Ovary (tissue), 10 donors: ENCODE measurements at regions of chr11 and their contacts with region 1.

Region 1: GRCh38 chr11:45339729-45340519 is 53.8 kb upstream of the SYT13 start:
- DNase-seq: peak; percentile 93 to 96 (median 96)
- H3K4me3 ChIP-seq: no peak overlapping the region
- H3K27ac ChIP-seq: no peak overlapping the region
- H3K4me1 ChIP-seq: peaks cover 2% of the 10 kb centered on the region
- H3K27me3 ChIP-seq: no peaks in the 10 kb centered on the region
- CTCF ChIP-seq: peak; percentile 81 to 88 (median 87)
- EP300 ChIP-seq: no peak
- POLR2A ChIP-seq: no peak

Region 2: DNA sequence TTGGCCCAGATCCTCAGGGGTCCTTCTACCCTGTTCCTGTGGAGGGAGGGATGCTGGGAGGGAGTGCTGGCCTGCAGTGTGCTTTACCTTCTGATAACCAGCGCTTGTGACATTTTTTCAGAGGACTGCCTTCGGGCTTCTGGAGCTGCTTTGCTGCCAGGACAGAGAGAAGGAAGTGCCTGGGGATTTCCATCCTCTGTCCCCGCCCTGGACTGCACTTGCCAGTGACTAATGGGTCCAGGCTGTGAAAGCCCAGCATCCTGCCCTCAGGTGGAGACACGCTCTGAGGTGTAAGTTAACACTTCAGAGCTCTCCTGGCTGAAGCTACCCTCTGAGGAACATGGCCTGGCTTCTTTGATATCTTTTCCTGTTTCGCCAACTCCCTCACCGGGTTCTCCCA is 104.9 kb after region 1 on chr11:
- intact Hi-C with region 1: no loop called
- DNase-seq: no peak
- H3K4me3 ChIP-seq: no peak overlapping the region
- H3K27ac ChIP-seq: no peak overlapping the region
- H3K4me1 ChIP-seq: no peaks in the 10 kb centered on the region
- H3K27me3 ChIP-seq: no peaks in the 10 kb centered on the region
- CTCF ChIP-seq: no peak
- EP300 ChIP-seq: no peak
- POLR2A ChIP-seq: no peak

Region 3: GRCh38 chr11:45537614-45538013 is 197.7 kb after region 1 on chr11:
- intact Hi-C with region 1: no loop called
- DNase-seq: no peak
- H3K4me3 ChIP-seq: no peak overlapping the region
- H3K27ac ChIP-seq: no peak overlapping the region
- H3K4me1 ChIP-seq: no peaks in the 10 kb centered on the region
- H3K27me3 ChIP-seq: no peaks in the 10 kb centered on the region
- CTCF ChIP-seq: no peak
- EP300 ChIP-seq: no peak
- POLR2A ChIP-seq: no peak

Region 4: DNA sequence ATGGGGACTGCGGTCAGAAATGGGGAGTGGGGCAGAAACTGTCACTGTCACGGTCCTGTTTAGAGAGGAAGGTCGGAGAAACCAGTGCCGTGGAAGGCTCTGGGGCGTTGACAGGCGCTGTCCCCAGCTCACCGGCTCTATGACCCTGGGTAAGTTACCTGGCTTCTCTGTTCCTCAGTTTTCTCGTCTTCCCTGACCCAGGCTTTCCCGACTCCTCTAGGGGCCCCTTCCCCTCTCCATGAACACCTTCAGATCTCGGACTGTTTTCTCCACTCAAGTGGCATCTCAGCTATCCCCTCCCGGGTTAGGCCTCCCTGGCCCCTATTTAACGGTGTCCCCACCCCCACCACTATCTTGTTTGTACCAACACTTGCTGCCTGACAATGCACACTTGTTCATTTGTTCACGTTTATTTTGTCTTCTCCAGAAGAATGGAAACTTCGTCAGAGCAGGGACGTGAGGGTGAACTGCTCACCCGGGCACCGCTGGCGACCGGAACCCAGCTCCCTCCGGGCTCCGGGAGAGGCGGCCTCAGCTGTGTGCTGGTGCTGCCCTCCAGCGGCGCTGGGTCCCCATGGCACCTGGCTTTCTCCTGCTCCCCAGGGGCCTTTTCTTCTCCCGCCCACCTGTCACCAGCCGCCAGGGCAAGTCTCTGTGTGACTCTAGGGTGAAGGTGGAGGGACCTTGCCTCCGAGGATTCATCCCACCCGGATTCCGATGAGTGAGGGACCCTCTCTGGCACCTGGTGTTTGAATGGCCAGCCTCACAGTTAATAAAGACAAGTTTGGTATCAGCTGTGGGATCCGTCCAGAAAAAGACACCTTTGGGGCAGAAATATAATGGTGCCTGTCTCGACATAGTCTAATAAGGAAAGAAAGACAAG is 431.9 kb after region 1 on chr11:
- intact Hi-C with region 1: loop called in 2 of 4 experiments (anchors 5 to 10 kb)
- DNase-seq: peak; percentile 77 to 89 (median 84)
- H3K4me3 ChIP-seq: peak overlapping the region; percentile 36
- H3K27ac ChIP-seq: peak overlapping the region; percentile 17 to 56
- H3K4me1 ChIP-seq: no peaks in the 10 kb centered on the region
- H3K27me3 ChIP-seq: no peaks in the 10 kb centered on the region
- CTCF ChIP-seq: peak; percentile 86 to 91 (median 87)
- EP300 ChIP-seq: no peak
- POLR2A ChIP-seq: no peak